ENCODE measurements at regions of chr18 and their contacts with region 1.

Region 1: GRCh38 chr18:59899298-59900221 is at the start of gene PMAIP1:
- DNase-seq: peak; percentile 82 to 88
- H3K4me3 ChIP-seq: peak within 1 kb of the TSS; percentile 90
- H3K27ac ChIP-seq: peak within 1 kb of the TSS; percentile 92
- H3K4me1 ChIP-seq: peaks cover 43% of the 10 kb centered on the region
- H3K27me3 ChIP-seq: no peaks in the 10 kb centered on the region
- CTCF ChIP-seq: no peak
- total RNA-seq, gene PMAIP1: 16.5 and 17.0 TPM in 2 replicates

Region 2: DNA sequence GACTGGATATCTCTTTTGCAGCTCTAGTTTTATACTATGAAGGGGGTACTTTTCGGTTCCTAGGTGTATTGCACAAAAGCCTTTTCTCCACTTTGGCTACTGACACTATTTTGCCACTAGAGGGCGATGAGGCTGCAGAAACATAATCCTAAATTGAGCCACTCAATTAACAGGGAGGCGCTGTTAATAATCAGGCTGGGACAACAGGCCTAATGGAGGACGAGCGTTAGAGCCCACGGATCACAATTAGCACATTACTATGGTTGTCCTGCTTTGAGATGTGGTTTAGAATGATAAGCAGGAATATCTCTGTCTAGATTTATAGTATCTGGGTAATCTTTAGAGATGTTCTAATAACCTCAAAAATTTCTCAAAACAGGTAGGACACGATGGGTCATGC is 62.0 kb before region 1 on chr18:
- CTCF ChIA-PET with region 1: interaction called, 4 read pairs
- POLR2A ChIA-PET with region 1: no interaction called
- intact Hi-C with region 1: loop called (anchors 2 kb)
- DNase-seq: peak; percentile 38 to 62
- H3K4me3 ChIP-seq: no peak overlapping the region
- H3K27ac ChIP-seq: no peak overlapping the region
- H3K4me1 ChIP-seq: no peaks in the 10 kb centered on the region
- H3K27me3 ChIP-seq: no peaks in the 10 kb centered on the region
- CTCF ChIP-seq: peak; percentile 93

Region 3: DNA sequence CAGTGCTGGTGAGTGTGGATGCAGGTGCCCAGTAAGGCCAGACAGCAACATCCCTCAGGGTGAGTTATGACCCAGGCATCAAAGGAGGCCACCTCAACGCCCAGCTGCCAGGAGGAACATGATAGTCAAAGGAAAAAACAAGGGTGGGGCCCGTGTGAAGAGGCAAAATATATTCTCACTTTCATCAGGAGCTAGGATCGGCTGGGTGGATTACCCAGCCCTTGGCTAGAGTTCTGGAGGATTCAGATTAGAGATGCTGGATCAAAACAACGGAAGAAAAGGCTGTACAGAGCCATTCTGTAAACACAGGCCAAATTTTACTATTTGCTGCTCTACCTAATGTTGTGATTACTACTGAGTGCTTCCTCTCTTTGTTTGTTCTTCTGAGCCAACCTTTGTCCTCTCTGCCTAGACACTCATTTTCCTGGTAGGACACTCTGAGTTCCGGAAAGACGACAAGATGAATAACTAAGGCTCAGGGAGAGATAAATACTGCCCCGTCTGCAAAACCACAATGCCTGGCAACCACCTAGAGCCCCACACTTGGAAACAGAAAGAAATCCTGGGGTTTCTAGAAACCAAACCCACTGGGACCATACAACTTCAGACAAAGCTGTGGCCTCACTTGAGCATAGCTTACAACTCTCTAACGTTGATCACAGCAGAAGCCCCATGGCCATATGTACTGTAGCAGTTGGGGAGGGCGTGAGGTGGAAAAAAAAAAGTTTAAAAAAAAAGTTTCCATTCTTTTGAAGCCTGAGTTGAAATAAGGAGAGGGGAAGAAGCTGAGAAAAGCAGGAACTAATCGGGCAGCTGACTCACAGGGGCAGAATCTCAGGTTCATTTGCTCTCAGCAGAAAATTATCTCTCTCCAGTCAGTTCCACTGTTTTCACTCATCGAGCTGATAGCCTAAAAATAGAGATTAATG is 17.6 kb before region 1 on chr18:
- CTCF ChIA-PET with region 1: no interaction called
- POLR2A ChIA-PET with region 1: interaction called, 7 read pairs
- intact Hi-C with region 1: loop called (anchors 2 kb)
- DNase-seq: peak; percentile 50 to 75
- H3K4me3 ChIP-seq: peak overlapping the region; percentile 22; the same call in 1 of the 2 replicates
- H3K27ac ChIP-seq: peak overlapping the region; percentile 90
- H3K4me1 ChIP-seq: peaks cover 52% of the 10 kb centered on the region
- H3K27me3 ChIP-seq: no peaks in the 10 kb centered on the region
- CTCF ChIP-seq: no peak

Region 4: GRCh38 chr18:59918320-59918755 is 18.8 kb after region 1 on chr18:
- CTCF ChIA-PET with region 1: interaction called, 3 read pairs
- POLR2A ChIA-PET with region 1: interaction called, 4 read pairs
- intact Hi-C with region 1: loop called (anchors 2 kb)
- DNase-seq: peak; percentile 86 to 94
- H3K4me3 ChIP-seq: peak overlapping the region; percentile 20; the same call in 1 of the 2 replicates
- H3K27ac ChIP-seq: peak overlapping the region; percentile 94
- H3K4me1 ChIP-seq: peaks cover 76% of the 10 kb centered on the region
- H3K27me3 ChIP-seq: no peaks in the 10 kb centered on the region
- CTCF ChIP-seq: no peak

Region 5: DNA sequence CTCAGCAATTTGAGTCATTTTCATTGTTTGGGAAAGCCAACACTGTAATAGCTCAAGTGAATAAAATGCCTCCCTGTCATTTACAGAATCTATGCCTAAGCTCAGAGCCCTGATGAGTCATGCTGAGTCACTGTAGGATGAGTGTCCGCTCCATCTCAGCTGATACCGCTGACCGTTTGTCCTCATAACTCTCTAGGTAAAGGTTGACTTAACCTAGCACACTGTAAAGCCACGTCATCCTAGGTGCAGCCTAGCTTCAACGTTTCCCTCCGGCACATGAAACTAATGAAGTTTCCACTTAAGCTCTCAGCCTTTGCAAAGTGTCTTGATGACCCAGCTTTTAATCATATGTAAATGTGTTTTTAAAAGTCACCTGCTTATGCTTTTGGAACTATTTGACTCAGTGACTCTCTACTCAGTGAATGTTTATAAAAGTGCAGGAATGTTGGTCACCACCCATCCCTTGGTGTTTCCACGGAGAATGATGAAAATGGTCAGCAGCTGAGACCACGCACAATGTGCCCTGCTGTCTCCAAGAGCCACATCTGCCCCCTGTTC is 154.3 kb after region 1 on chr18:
- CTCF ChIA-PET with region 1: no interaction called
- POLR2A ChIA-PET with region 1: no interaction called
- intact Hi-C with region 1: loop called (anchors 5 kb)
- DNase-seq: peak; percentile 70 to 99
- H3K4me3 ChIP-seq: no peak overlapping the region; the same call in 1 of the 2 replicates
- H3K27ac ChIP-seq: peak overlapping the region; percentile 91
- H3K4me1 ChIP-seq: peaks cover 27% of the 10 kb centered on the region
- H3K27me3 ChIP-seq: no peaks in the 10 kb centered on the region
- CTCF ChIP-seq: no peak